Activated T-helper 1 cell treated with anti-CD3 and anti-CD28 coated beads, Interleukin-12 subunit alpha, Interleukin-12 subunit beta, Interleukin-2, Interleukin-4 antibody, amounts not matched to agents 30 ng/mL and 10 ng/mL and 1 ng/mL, durations not matched to agents 14 hours and 24 hours and 36 hours (primary cell): ENCODE measurements at regions of chr17 and their contacts with region 1.

Region 1: DNA sequence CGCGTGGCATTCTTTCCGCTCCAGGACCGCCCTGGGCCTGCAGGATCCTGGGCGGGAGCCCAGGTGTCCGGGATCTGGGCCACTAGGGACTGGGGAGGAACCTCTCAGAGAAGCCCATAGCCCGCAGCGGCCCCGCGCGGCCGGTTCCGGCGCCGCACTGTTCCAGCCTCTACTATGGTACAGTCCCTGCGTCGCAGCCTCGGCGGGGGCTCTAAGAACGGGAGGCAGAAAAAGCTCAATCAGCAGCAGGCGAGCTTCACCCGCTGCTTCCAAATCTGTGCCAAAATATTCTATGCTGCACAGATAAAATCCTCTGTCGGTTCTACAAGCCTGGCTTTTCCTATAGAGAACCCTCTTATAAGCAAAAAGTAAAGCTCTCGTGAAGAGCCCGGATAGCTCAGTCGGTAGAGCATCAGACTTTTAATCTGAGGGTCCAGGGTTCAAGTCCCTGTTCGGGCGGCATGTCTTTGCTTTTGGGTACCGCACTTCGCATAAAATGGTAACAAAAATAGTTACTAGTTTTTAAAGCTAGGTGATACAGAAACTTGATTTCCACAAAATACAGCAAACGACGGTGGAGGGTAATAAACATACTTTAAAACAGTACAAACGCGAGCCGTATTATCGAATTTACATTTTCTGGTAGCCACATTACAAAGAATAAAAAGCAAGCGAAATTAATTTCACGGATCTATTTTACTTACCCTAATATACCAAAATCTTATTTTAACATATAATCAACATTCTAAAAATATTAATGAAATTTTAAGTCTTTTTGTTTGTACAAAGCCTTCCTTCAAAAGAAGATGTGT is 661 bp upstream of the ALOXE3 start:
- DNase-seq: peak; percentile 78
- H3K4me3 Mint-ChIP-seq: peak overlapping the region; percentile 91
- H3K27ac Mint-ChIP-seq: peak overlapping the region; percentile 97
- H3K4me1 Mint-ChIP-seq: peaks cover 46% of the 10 kb centered on the region
- H3K27me3 Mint-ChIP-seq: peaks cover 67% of the 10 kb centered on the region

Region 2: GRCh38 chr17:7844292-7845154 is 274.5 kb before region 1 on chr17:
- intact Hi-C with region 1: loop called (anchors 5 kb)
- DNase-seq: peak; percentile 87
- H3K4me3 Mint-ChIP-seq: peak overlapping the region; percentile 89
- H3K27ac Mint-ChIP-seq: peak overlapping the region; percentile 96
- H3K4me1 Mint-ChIP-seq: peaks cover 37% of the 10 kb centered on the region
- H3K27me3 Mint-ChIP-seq: no peaks in the 10 kb centered on the region

Region 3: DNA sequence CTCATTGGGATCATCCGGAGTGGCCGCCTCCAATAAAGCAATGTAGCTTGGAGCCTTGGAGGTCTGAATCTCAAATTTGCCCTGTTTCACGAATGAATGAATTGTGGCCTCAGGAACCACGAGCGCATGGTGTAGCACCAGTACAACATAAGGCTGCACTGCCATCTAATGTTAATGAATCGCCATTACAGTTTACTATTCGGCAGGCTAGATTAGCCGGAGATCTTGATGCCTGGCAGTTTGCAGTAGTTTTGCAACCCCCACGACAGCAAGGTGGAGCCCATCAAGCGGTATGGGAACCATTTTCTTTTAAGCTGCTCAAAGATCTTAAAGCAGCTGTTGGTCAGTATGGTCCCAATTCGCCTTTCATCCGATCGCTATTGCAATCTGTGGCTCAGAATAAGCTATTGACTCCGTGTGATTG is 61.3 kb before region 1 on chr17:
- intact Hi-C with region 1: loop called (anchors 1 kb)
- DNase-seq: peak; percentile 26
- H3K4me3 Mint-ChIP-seq: no peak overlapping the region
- H3K27ac Mint-ChIP-seq: no peak overlapping the region
- H3K4me1 Mint-ChIP-seq: peaks cover 27% of the 10 kb centered on the region
- H3K27me3 Mint-ChIP-seq: peaks cover 50% of the 10 kb centered on the region

Region 4: DNA sequence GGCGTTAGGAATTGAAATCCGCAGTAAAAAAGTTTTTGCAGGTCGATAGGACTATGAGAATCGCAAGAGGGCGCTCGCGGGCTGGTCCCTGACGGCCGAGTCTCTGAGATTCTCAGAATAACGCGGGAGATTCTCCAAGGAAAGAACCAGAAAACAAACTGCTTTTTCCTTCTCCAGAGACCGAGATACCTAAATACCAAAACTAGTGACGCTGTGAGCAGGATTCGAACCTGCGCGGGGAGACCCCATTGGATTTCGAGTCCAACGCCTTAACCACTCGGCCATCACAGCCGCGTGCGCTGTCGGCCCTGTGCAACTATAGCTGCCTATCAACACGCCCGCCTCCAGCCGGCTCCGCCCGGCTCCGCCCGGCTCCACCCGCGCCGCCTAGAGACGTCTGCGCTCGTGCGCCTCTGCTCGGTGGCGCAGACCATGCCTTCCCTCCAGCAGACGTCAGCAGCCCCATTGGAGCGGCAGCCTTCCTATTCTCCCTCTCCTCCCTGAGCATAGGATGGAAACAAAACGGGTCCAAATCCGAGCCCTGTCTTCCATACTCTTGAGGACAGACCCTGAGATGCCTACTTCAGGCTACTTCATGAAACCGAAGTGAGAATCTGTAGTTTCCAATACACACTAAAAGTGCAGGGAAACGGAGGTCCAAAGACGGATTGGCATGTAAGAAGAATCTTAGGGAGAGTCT is 19.8 kb after region 1 on chr17:
- intact Hi-C with region 1: loop called (anchors 1 kb)
- DNase-seq: peak; percentile 95
- H3K4me3 Mint-ChIP-seq: no peak overlapping the region
- H3K27ac Mint-ChIP-seq: no peak overlapping the region
- H3K4me1 Mint-ChIP-seq: no peaks in the 10 kb centered on the region
- H3K27me3 Mint-ChIP-seq: peaks cover 11% of the 10 kb centered on the region

Region 5: GRCh38 chr17:8189711-8190477 is 70.9 kb after region 1 on chr17 and contains the start of gene BORCS6:
- intact Hi-C with region 1: loop called (anchors 1 kb)
- DNase-seq: peak; percentile 94
- H3K4me3 Mint-ChIP-seq: no peak within 1 kb of the TSS
- H3K27ac Mint-ChIP-seq: peak within 1 kb of the TSS; percentile 84
- H3K4me1 Mint-ChIP-seq: peaks cover 11% of the 10 kb centered on the region
- H3K27me3 Mint-ChIP-seq: no peaks in the 10 kb centered on the region
- total RNA-seq, gene BORCS6: 6.3 and 6.7 TPM in 2 replicates

Region 6: GRCh38 chr17:8294814-8295316 is 175.9 kb after region 1 on chr17:
- intact Hi-C with region 1: loop called (anchors 2 kb)
- DNase-seq: no peak
- H3K4me3 Mint-ChIP-seq: peak overlapping the region; percentile 87
- H3K27ac Mint-ChIP-seq: peak overlapping the region; percentile 83
- H3K4me1 Mint-ChIP-seq: peaks cover 42% of the 10 kb centered on the region
- H3K27me3 Mint-ChIP-seq: no peaks in the 10 kb centered on the region